Activated CD4-positive, alpha-beta memory T cell treated with anti-CD3 and anti-CD28 coated beads, Interleukin-2, amount 10 ng/mL, durations not matched to agents 7 days and 5 days (primary cell): ENCODE measurements at regions of chr3 and their contacts with region 1.

Region 1: GRCh38 chr3:51982782-51983577 is at the start of gene ACY1:
- DNase-seq: peak; percentile 79
- H3K4me3 Mint-ChIP-seq: peak within 1 kb of the TSS; percentile 97
- H3K27ac Mint-ChIP-seq: peak within 1 kb of the TSS; percentile 92
- H3K4me1 Mint-ChIP-seq: peaks cover 31% of the 10 kb centered on the region
- H3K27me3 Mint-ChIP-seq: no peaks in the 10 kb centered on the region
- total RNA-seq, gene ACY1: 18.4 to 22.0 TPM

Region 2: GRCh38 chr3:51967384-51968169 is 15.4 kb before region 1 on chr3 and contains the start of gene PCBP4:
- CTCF ChIA-PET with region 1: interaction called, 43 read pairs
- POLR2A ChIA-PET with region 1: interaction called, 10 read pairs
- DNase-seq: peak; percentile 48
- H3K4me3 Mint-ChIP-seq: peak within 1 kb of the TSS; percentile 80
- H3K27ac Mint-ChIP-seq: peak within 1 kb of the TSS; percentile 61
- H3K4me1 Mint-ChIP-seq: peaks cover 33% of the 10 kb centered on the region
- H3K27me3 Mint-ChIP-seq: peaks cover 8% of the 10 kb centered on the region
- total RNA-seq, gene PCBP4: 31.0 to 34.2 TPM